ENCODE measurements at regions of chr2 and their contacts with region 1.

Region 1: GRCh38 chr2:205984381-205984780 is 101.6 kb downstream of the INO80D start:
- DNase-seq: no peak
- H3K4me3 ChIP-seq: no peak overlapping the region
- H3K27ac ChIP-seq: no peak overlapping the region
- H3K4me1 ChIP-seq: no peaks in the 10 kb centered on the region
- H3K27me3 ChIP-seq: no peaks in the 10 kb centered on the region
- CTCF ChIP-seq: no peak

Region 2: GRCh38 chr2:204161009-204161408 is 1823.4 kb before region 1 on chr2:
- CTCF ChIA-PET with region 1: no interaction called
- POLR2A ChIA-PET with region 1: no interaction called
- intact Hi-C with region 1: no loop called
- DNase-seq: no peak
- H3K4me3 ChIP-seq: no peak overlapping the region
- H3K27ac ChIP-seq: no peak overlapping the region
- H3K4me1 ChIP-seq: no peaks in the 10 kb centered on the region
- H3K27me3 ChIP-seq: no peaks in the 10 kb centered on the region
- CTCF ChIP-seq: no peak

Region 3: GRCh38 chr2:205998583-205998982 is 14.2 kb after region 1 on chr2:
- CTCF ChIA-PET with region 1: no interaction called
- POLR2A ChIA-PET with region 1: interaction called, 11 read pairs
- intact Hi-C with region 1: no loop called
- DNase-seq: no peak
- H3K4me3 ChIP-seq: no peak overlapping the region
- H3K27ac ChIP-seq: no peak overlapping the region
- H3K4me1 ChIP-seq: peaks cover 30% of the 10 kb centered on the region
- H3K27me3 ChIP-seq: no peaks in the 10 kb centered on the region
- CTCF ChIP-seq: no peak